ENCODE measurements at regions of chr3 and their contacts with region 1.

Region 1: GRCh38 chr3:118531856-118532255 is 502.8 kb downstream of the IGSF11 start:
- DNase-seq: no peak
- H3K4me3 ChIP-seq: no peak overlapping the region
- H3K4me3 Mint-ChIP-seq: no peak overlapping the region
- H3K27ac Mint-ChIP-seq: no peak overlapping the region
- H3K4me1 ChIP-seq: peaks cover 16% of the 10 kb centered on the region
- H3K4me1 Mint-ChIP-seq: peaks cover 19% of the 10 kb centered on the region
- H3K27me3 ChIP-seq: no peaks in the 10 kb centered on the region
- H3K27me3 Mint-ChIP-seq: no peaks in the 10 kb centered on the region
- CTCF ChIP-seq: no peak

Region 2: DNA sequence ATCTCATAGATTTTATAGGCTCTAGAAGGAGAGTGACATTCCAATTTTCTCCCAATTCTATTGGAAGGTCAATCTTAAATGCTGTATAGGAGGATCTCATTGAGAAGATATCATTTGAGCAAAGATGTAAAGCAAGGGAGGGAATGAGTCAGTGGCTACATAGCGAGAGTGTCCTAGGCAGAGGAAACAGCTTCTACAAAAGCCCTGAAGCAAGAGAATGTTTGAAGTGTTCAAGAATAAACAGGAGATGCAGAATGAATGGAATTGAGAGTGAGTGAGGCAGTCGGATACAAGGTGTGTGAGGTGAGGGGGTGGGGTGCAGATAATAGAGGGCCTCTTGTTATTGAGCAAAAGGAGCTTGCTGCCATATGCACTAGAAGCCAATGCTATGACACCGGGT is 43.1 kb before region 1 on chr3:
- CTCF ChIA-PET with region 1: no interaction called
- POLR2A ChIA-PET with region 1: no interaction called
- intact Hi-C with region 1: loop called (anchors 2 kb)
- DNase-seq: no peak
- H3K4me3 ChIP-seq: no peak overlapping the region
- H3K4me3 Mint-ChIP-seq: no peak overlapping the region
- H3K27ac Mint-ChIP-seq: peak overlapping the region; percentile 1
- H3K4me1 ChIP-seq: no peaks in the 10 kb centered on the region
- H3K4me1 Mint-ChIP-seq: peaks cover 10% of the 10 kb centered on the region
- H3K27me3 ChIP-seq: no peaks in the 10 kb centered on the region
- H3K27me3 Mint-ChIP-seq: no peaks in the 10 kb centered on the region
- CTCF ChIP-seq: no peak

Region 3: GRCh38 chr3:118842147-118842863 is 310.4 kb after region 1 on chr3:
- CTCF ChIA-PET with region 1: no interaction called
- POLR2A ChIA-PET with region 1: no interaction called
- intact Hi-C with region 1: no loop called
- DNase-seq: peak in 1 of 2 experiments; percentile 11
- H3K4me3 ChIP-seq: no peak overlapping the region
- H3K4me3 Mint-ChIP-seq: no peak overlapping the region
- H3K27ac Mint-ChIP-seq: no peak overlapping the region
- H3K4me1 ChIP-seq: no peaks in the 10 kb centered on the region
- H3K4me1 Mint-ChIP-seq: no peaks in the 10 kb centered on the region
- H3K27me3 ChIP-seq: no peaks in the 10 kb centered on the region
- H3K27me3 Mint-ChIP-seq: no peaks in the 10 kb centered on the region
- CTCF ChIP-seq: no peak

Measured in Caco-2 (cell line).